ENCODE measurements at regions of chr19 and their contacts with region 1.

Region 1: DNA sequence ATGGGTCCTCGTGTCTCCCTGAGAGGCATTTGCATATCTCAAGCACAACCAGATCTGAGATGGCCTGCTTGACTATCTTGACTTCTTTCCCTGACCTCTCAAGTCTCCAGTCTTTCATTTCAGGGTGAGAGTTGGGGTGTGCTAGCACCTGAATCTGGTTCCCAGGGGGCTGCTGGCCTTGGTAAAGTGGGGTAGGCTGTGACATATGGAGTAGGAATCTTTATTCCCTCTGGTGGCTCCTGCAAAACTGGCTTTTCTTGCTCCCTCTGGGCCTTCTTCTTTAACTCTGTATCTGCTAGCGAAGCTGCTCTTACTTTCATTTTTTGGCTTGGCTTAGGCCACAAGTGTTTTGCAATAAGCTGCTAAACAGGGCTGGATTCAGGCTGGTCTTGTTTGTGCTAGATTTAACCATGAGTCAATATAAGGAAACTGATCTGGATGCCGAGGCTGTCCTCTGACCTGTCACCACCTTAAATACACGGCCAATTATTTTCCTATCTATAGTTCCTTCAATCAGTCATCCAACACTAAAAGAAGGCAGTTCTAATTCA is 42.3 kb downstream of the ZNF493 start:
- DNase-seq: peak; percentile 22
- ATAC-seq: no peak
- H3K4me3 ChIP-seq: no peak overlapping the region
- H3K27ac ChIP-seq: no peak overlapping the region
- H3K4me1 ChIP-seq: no peaks in the 10 kb centered on the region
- H3K27me3 ChIP-seq: no peaks in the 10 kb centered on the region
- CTCF ChIP-seq: no peak

Region 2: GRCh38 chr19:21328885-21329605 is 110.2 kb before region 1 on chr19 and contains the start of gene ZNF708:
- CTCF ChIA-PET with region 1: no interaction called
- POLR2A ChIA-PET with region 1: no interaction called
- intact Hi-C with region 1: loop called (anchors 10 kb)
- DNase-seq: peak; percentile 88
- ATAC-seq: peak; percentile 99
- H3K4me3 ChIP-seq: peak within 1 kb of the TSS; percentile 92
- H3K27ac ChIP-seq: peak within 1 kb of the TSS; percentile 67
- H3K4me1 ChIP-seq: no peaks in the 10 kb centered on the region
- H3K27me3 ChIP-seq: no peaks in the 10 kb centered on the region
- CTCF ChIP-seq: no peak
- total RNA-seq, gene ZNF708: 4.2 and 7.3 TPM in 2 replicates

Region 3: DNA sequence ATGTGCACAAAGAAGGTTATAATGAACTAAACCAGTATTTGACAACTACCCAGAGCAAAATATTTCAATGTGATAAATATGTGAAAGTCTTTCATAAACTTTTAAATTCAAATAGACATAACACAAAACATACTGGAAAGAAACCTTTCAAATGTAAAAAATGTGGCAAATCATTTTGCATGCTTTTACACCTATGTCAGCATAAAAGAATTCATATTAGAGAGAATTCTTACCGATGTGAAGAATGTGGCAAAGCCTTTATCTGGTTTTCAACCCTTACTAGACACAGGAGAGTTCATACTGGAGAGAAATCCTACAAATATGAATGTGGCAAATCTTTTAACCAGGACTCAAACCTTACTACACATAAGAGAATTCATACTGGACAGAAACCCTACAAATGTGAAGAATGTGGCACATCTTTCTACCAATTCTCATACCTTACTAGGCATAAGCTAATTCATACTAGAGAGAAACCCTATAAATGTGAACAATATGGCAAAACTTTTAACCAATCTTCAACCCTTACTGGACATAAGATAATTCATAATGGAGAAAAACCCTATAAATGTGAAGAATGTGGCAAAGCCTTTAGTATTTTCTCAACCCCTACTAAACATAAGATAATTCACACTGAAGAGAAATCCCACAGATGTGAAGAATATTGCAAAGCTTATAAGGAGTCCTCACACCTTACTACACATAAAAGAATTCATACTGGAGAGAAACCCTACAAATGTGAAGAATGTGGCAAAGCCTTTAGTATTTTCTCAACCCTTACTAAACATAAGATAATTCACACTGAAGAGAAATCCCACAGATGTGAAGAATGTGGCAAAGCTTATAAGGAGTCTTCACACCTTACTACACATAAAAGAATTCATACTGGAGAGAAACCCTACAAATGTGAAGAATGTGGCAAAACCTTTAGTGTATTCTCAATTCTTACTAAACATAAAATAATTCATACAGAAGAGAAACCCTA is 15.9 kb before region 1 on chr19:
- CTCF ChIA-PET with region 1: no interaction called
- POLR2A ChIA-PET with region 1: no interaction called
- intact Hi-C with region 1: no loop called
- DNase-seq: no peak
- ATAC-seq: no peak
- H3K4me3 ChIP-seq: no peak overlapping the region
- H3K27ac ChIP-seq: no peak overlapping the region
- H3K4me1 ChIP-seq: no peaks in the 10 kb centered on the region
- H3K27me3 ChIP-seq: no peaks in the 10 kb centered on the region
- CTCF ChIP-seq: no peak

Region 4: DNA sequence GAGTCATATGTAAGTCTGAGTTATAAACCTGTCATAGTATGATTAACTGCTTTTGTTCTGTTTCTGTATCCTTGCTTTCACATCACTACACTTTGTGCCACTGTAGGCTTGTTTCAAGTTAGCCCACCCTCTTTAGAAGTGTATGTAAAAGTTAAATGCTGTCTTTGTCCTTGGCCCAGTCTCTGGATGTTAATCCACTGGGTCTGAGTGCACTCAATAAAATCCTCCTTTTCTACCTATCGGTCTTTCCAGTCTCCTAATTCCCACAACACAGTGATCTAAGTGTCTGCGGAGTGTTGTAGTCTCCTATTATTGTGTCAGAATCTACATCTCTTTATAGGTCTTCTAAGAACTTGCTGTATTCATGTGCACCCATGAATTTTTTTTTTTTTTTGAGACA is 80.2 kb after region 1 on chr19:
- CTCF ChIA-PET with region 1: no interaction called
- POLR2A ChIA-PET with region 1: no interaction called
- intact Hi-C with region 1: no loop called
- DNase-seq: no peak
- ATAC-seq: no peak
- H3K4me3 ChIP-seq: no peak overlapping the region; the same call in 1 of the 2 replicates
- H3K27ac ChIP-seq: no peak overlapping the region
- H3K4me1 ChIP-seq: no peaks in the 10 kb centered on the region
- H3K27me3 ChIP-seq: no peaks in the 10 kb centered on the region
- CTCF ChIP-seq: no peak